B cell (primary cell): ENCODE measurements at regions of chr22 and their contacts with region 1.

Region 1: GRCh38 chr22:41832553-41833368 is at the start of gene SREBF2:
- DNase-seq: peak; percentile 99
- ATAC-seq: peak; percentile 86
- H3K4me3 ChIP-seq: peak within 1 kb of the TSS; percentile 49 to 92 (median 90)
- H3K4me3 Mint-ChIP-seq: peak within 1 kb of the TSS; percentile 96
- H3K27ac ChIP-seq: peak within 1 kb of the TSS; percentile 99 to 100
- H3K27ac Mint-ChIP-seq: peak within 1 kb of the TSS; percentile 99
- H3K4me1 ChIP-seq: peaks cover 20 to 36% of the 10 kb centered on the region in 2 donors
- H3K4me1 Mint-ChIP-seq: peaks cover 55% of the 10 kb centered on the region
- H3K27me3 ChIP-seq: no peaks in the 10 kb centered on the region
- H3K27me3 Mint-ChIP-seq: no peaks in the 10 kb centered on the region
- CTCF ChIP-seq: no peak
- total RNA-seq, gene SREBF2: 287 and 304 TPM in 2 replicates

Region 2: DNA sequence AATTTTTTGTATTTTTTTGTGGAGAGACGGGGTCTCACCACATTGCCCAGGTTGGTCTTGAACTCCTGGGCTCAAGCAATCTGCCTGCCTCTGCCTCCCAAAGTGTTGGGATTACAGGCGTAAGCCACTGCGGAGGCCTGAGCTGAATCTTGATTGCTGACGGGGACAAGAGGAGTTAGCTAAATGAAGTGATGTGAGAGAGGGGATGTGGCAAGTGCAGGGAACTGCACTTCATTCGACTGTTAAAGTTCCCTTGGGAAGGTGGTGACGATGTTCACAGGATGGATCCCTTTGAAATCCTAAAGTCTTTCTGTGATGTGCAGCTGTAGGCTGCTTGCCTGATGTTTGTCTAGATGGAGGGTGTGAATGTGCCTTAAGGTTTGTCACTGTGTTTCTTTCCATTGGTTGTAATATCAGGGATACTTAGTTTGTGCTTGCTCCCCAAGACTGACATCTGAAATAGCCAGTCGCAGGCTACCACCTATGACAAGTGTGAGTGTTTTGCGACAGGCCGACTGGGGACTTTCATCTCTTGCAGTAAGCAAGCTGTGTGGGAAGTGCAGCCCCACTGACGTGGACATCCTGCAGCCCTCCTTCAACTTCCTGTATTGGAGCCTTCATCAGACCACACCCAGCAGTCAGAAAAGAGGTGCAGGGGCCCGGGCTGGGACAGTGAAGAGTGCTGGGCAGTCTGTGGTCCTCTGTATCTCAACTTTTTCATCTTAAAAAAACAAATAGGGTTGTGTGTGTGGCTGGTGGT is 51.8 kb before region 1 on chr22:
- CTCF ChIA-PET with region 1: interaction called, 7 read pairs
- POLR2A ChIA-PET with region 1: interaction called, 12 read pairs
- intact Hi-C with region 1: no loop called
- DNase-seq: peak; percentile 94
- ATAC-seq: peak; percentile 96
- H3K4me3 ChIP-seq: peak overlapping the region; percentile 47 to 76 (median 60)
- H3K4me3 Mint-ChIP-seq: peak overlapping the region; percentile 88
- H3K27ac ChIP-seq: peak overlapping the region; percentile 90 to 95
- H3K27ac Mint-ChIP-seq: peak overlapping the region; percentile 98
- H3K4me1 ChIP-seq: peaks cover 26 to 31% of the 10 kb centered on the region in 2 donors
- H3K4me1 Mint-ChIP-seq: peaks cover 37% of the 10 kb centered on the region
- H3K27me3 ChIP-seq: no peaks in the 10 kb centered on the region
- H3K27me3 Mint-ChIP-seq: no peaks in the 10 kb centered on the region
- CTCF ChIP-seq: no peak

Region 3: DNA sequence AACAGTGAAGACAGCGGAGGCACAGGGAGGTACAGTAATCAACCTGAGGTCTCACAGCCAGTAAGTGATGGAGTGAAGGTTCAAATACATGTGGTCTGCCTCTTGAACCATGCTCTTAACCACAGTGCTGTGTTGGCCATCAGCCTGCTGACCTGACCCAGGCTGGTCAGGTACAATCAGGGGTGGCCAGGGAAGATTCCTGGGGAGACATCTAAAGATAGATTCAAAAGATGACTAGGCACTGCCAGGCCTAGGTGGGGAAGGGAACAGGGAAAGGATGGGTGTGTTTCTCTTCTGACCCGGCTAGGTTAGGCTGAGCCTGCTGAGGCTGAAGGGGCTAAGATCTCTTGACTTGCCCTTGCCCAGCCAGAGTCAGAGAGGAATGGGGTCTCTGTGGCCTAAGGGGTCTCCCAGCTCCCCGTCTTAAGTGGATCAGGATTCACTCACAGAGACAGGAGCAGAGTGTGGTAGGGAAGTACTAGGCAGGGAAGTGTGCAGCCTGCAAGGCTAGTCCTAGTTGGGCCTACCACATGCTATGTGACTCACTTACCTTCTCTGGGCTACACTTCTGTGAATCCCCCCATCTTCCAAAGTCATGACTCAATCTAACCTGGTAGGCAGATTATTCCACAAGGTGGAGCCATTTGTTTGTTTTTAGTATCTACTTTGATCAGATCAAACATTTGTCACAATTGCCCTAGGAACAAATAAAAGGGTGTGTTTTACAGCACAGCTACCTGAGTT is 10.3 kb before region 1 on chr22:
- CTCF ChIA-PET with region 1: interaction called, 25 read pairs
- POLR2A ChIA-PET with region 1: no interaction called
- intact Hi-C with region 1: loop called (anchors 1 kb)
- DNase-seq: peak; percentile 85
- ATAC-seq: peak; percentile 84
- H3K4me3 ChIP-seq: no peak overlapping the region
- H3K4me3 Mint-ChIP-seq: no peak overlapping the region
- H3K27ac ChIP-seq: no peak overlapping the region
- H3K27ac Mint-ChIP-seq: peak overlapping the region; percentile 57
- H3K4me1 ChIP-seq: no peaks in the 10 kb centered on the region
- H3K4me1 Mint-ChIP-seq: peaks cover 7% of the 10 kb centered on the region
- H3K27me3 ChIP-seq: no peaks in the 10 kb centered on the region
- H3K27me3 Mint-ChIP-seq: no peaks in the 10 kb centered on the region
- CTCF ChIP-seq: peak; percentile 74

Region 4: GRCh38 chr22:41883400-41883799 is 50.6 kb after region 1 on chr22:
- CTCF ChIA-PET with region 1: interaction called, 3 read pairs
- POLR2A ChIA-PET with region 1: interaction called, 4 read pairs
- intact Hi-C with region 1: loop called (anchors 2 kb)
- DNase-seq: no peak
- ATAC-seq: no peak
- H3K4me3 ChIP-seq: no peak overlapping the region
- H3K4me3 Mint-ChIP-seq: peak overlapping the region; percentile 44
- H3K27ac ChIP-seq: peak overlapping the region; percentile 52 to 71
- H3K27ac Mint-ChIP-seq: peak overlapping the region; percentile 93
- H3K4me1 ChIP-seq: peaks cover 23 to 39% of the 10 kb centered on the region in 2 donors
- H3K4me1 Mint-ChIP-seq: peaks cover 71% of the 10 kb centered on the region
- H3K27me3 ChIP-seq: no peaks in the 10 kb centered on the region
- H3K27me3 Mint-ChIP-seq: no peaks in the 10 kb centered on the region
- CTCF ChIP-seq: no peak

Region 5: GRCh38 chr22:41919357-41920224 is 86.8 kb after region 1 on chr22:
- CTCF ChIA-PET with region 1: interaction called, 3 read pairs
- POLR2A ChIA-PET with region 1: interaction called, 21 read pairs
- intact Hi-C with region 1: loop called (anchors 2 kb)
- DNase-seq: peak; percentile 93
- ATAC-seq: peak; percentile 54
- H3K4me3 ChIP-seq: peak overlapping the region; percentile 14 to 60 (median 52)
- H3K4me3 Mint-ChIP-seq: peak overlapping the region; percentile 86
- H3K27ac ChIP-seq: peak overlapping the region; percentile 89 to 93
- H3K27ac Mint-ChIP-seq: peak overlapping the region; percentile 97
- H3K4me1 ChIP-seq: peaks cover 79 to 86% of the 10 kb centered on the region in 2 donors
- H3K4me1 Mint-ChIP-seq: peaks cover 78% of the 10 kb centered on the region
- H3K27me3 ChIP-seq: peaks cover 0 to 8% (median 3%) of the 10 kb centered on the region in 4 experiments
- H3K27me3 Mint-ChIP-seq: no peaks in the 10 kb centered on the region
- CTCF ChIP-seq: no peak

Region 6: DNA sequence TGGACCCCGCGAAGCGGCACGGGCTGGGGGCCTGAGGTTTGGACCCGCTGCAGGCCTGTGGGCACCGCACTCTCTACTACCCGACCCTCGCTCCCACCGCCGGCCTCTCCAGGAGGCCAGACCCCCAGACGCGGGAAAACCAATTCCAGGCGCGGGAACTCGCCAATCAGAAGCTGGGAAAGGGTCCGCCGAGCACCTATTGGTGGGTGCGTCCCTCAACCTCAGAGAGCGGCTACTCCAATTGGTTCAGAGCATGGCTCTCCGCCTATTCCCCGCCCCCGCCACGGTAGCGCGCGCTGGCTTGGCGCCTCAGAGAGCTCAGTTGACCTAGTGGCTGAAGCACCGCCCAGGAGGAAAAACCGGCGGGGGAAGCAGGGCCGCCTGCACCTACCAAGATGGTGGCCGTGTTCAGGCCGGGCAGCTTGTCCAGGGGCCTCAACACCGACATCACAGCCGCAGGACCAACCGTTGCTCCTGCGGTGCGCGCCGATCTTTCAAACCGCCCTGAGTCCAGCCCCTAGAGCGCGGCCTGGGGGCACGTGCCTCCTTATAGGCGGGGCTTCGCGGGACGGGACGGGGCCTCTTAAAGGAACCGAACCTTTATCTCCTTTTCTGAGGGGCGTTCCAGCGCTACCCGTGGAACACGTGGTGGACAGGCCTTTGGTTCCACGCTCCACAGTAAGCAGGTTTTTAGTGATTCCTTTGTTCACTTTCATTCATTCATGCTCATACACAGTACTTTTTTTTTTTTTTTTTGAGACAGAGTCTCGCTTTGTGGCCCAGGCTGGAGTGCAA is 114.1 kb after region 1 on chr22 and contains the start of gene CENPM:
- CTCF ChIA-PET with region 1: interaction called, 27 read pairs
- POLR2A ChIA-PET with region 1: interaction called, 13 read pairs
- intact Hi-C with region 1: no loop called
- DNase-seq: peak; percentile 93
- ATAC-seq: peak; percentile 91
- H3K4me3 ChIP-seq: peak within 1 kb of the TSS; percentile 38 to 86 (median 68)
- H3K4me3 Mint-ChIP-seq: peak within 1 kb of the TSS; percentile 97
- H3K27ac ChIP-seq: peak within 1 kb of the TSS in 1 of 2 donors; percentile 11
- H3K27ac Mint-ChIP-seq: peak within 1 kb of the TSS; percentile 73
- H3K4me1 ChIP-seq: peaks cover 20 to 44% of the 10 kb centered on the region in 2 donors
- H3K4me1 Mint-ChIP-seq: peaks cover 39% of the 10 kb centered on the region
- H3K27me3 ChIP-seq: peaks cover 0 to 10% (median 0%) of the 10 kb centered on the region in 4 experiments
- H3K27me3 Mint-ChIP-seq: no peaks in the 10 kb centered on the region
- CTCF ChIP-seq: no peak
- total RNA-seq, gene CENPM: 26.0 and 30.7 TPM in 2 replicates

Region 7: GRCh38 chr22:42079319-42080251 is 246.8 kb after region 1 on chr22 and contains the start of gene SMDT1:
- CTCF ChIA-PET with region 1: no interaction called
- POLR2A ChIA-PET with region 1: no interaction called
- intact Hi-C with region 1: loop called (anchors 1 kb)
- DNase-seq: peak; percentile 100
- ATAC-seq: peak; percentile 86
- H3K4me3 ChIP-seq: peak within 1 kb of the TSS; percentile 66 to 92 (median 86)
- H3K4me3 Mint-ChIP-seq: peak within 1 kb of the TSS; percentile 96
- H3K27ac ChIP-seq: peak within 1 kb of the TSS; percentile 99
- H3K27ac Mint-ChIP-seq: peak within 1 kb of the TSS; percentile 97
- H3K4me1 ChIP-seq: peaks cover 22 to 32% of the 10 kb centered on the region in 2 donors
- H3K4me1 Mint-ChIP-seq: peaks cover 41% of the 10 kb centered on the region
- H3K27me3 ChIP-seq: no peaks in the 10 kb centered on the region
- H3K27me3 Mint-ChIP-seq: no peaks in the 10 kb centered on the region
- CTCF ChIP-seq: no peak
- total RNA-seq, gene SMDT1: 133 and 140 TPM in 2 replicates